ENCODE measurements at regions of chr5 and their contacts with region 1.

Region 1: GRCh38 chr5:35003018-35003957 is 44.5 kb downstream of the AGXT2 start:
- DNase-seq: no peak
- H3K4me3 ChIP-seq: no peak overlapping the region
- CTCF ChIP-seq: peak; percentile 79

Region 2: GRCh38 chr5:34915139-34915855 is 88.0 kb before region 1 on chr5 and contains the starts of genes BRIX1 and RAD1:
- CTCF ChIA-PET with region 1: interaction called, 12 read pairs
- POLR2A ChIA-PET with region 1: no interaction called
- DNase-seq: peak; percentile 77
- H3K4me3 ChIP-seq: peak within 1 kb of the TSS; percentile 93
- CTCF ChIP-seq: peak; percentile 15

Region 3: GRCh38 chr5:34970552-34970951 is 32.7 kb before region 1 on chr5:
- CTCF ChIA-PET with region 1: interaction called, 13 read pairs
- POLR2A ChIA-PET with region 1: no interaction called
- DNase-seq: no peak
- H3K4me3 ChIP-seq: no peak overlapping the region
- CTCF ChIP-seq: no peak

Region 4: GRCh38 chr5:35016174-35017051 is 13.1 kb after region 1 on chr5:
- CTCF ChIA-PET with region 1: interaction called, 12 read pairs
- POLR2A ChIA-PET with region 1: no interaction called
- DNase-seq: no peak
- H3K4me3 ChIP-seq: no peak overlapping the region
- CTCF ChIP-seq: no peak

Region 5: GRCh38 chr5:35044649-35045048 is 41.4 kb after region 1 on chr5:
- CTCF ChIA-PET with region 1: interaction called, 10 read pairs
- POLR2A ChIA-PET with region 1: no interaction called
- DNase-seq: no peak
- H3K4me3 ChIP-seq: no peak overlapping the region
- CTCF ChIP-seq: no peak

Measured in AG04449 (cell line).